Psoas muscle (tissue), 8 donors: ENCODE measurements at regions of chr9 and their contacts with region 1.

Region 1: GRCh38 chr9:14006386-14007187 is 307.4 kb downstream of the NFIB start:
- DNase-seq: no peak
- ATAC-seq: no peak
- H3K4me3 ChIP-seq: no peak overlapping the region
- H3K27ac ChIP-seq: no peak overlapping the region
- H3K4me1 ChIP-seq: peaks cover 4% of the 10 kb centered on the region
- H3K27me3 ChIP-seq: no peaks in the 10 kb centered on the region
- CTCF ChIP-seq: no peak

Region 2: GRCh38 chr9:13524245-13524644 is 482.3 kb before region 1 on chr9:
- intact Hi-C with region 1: no loop called
- DNase-seq: no peak
- ATAC-seq: no peak
- H3K4me3 ChIP-seq: no peak overlapping the region
- H3K27ac ChIP-seq: no peak overlapping the region
- H3K4me1 ChIP-seq: no peaks in the 10 kb centered on the region
- H3K27me3 ChIP-seq: no peaks in the 10 kb centered on the region
- CTCF ChIP-seq: no peak

Region 3: GRCh38 chr9:13967011-13967410 is 39.6 kb before region 1 on chr9:
- intact Hi-C with region 1: loop called in 1 of 2 experiments (anchors 5 kb)
- DNase-seq: no peak
- ATAC-seq: no peak
- H3K4me3 ChIP-seq: no peak overlapping the region
- H3K27ac ChIP-seq: no peak overlapping the region
- H3K4me1 ChIP-seq: peaks cover 17% of the 10 kb centered on the region
- H3K27me3 ChIP-seq: no peaks in the 10 kb centered on the region
- CTCF ChIP-seq: no peak

Region 4: DNA sequence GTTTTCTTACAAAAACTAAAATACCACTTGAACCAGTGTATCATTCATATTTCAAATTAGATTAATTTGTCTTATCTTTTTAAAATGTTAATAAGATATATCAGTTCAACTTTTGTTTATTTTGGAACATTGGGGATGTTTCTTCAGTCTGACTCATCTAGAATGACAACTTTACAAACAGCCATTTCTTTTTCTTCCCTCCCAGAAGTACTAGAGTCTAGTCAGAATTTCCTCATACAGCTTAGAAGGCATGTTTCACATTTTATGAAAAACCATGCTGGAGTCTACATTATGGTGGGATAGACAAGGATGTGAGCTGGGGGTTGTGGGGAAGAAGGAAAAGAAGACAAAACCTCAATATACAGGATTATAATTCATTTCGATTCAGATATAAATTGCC is 44.9 kb after region 1 on chr9:
- intact Hi-C with region 1: no loop called
- DNase-seq: no peak
- ATAC-seq: no peak
- H3K4me3 ChIP-seq: no peak overlapping the region
- H3K27ac ChIP-seq: no peak overlapping the region
- H3K4me1 ChIP-seq: peaks cover under 1% of the 10 kb centered on the region
- H3K27me3 ChIP-seq: no peaks in the 10 kb centered on the region
- CTCF ChIP-seq: no peak